Panc1 (cell line): ENCODE measurements at regions of chr12 and their contacts with region 1.

Region 1: DNA sequence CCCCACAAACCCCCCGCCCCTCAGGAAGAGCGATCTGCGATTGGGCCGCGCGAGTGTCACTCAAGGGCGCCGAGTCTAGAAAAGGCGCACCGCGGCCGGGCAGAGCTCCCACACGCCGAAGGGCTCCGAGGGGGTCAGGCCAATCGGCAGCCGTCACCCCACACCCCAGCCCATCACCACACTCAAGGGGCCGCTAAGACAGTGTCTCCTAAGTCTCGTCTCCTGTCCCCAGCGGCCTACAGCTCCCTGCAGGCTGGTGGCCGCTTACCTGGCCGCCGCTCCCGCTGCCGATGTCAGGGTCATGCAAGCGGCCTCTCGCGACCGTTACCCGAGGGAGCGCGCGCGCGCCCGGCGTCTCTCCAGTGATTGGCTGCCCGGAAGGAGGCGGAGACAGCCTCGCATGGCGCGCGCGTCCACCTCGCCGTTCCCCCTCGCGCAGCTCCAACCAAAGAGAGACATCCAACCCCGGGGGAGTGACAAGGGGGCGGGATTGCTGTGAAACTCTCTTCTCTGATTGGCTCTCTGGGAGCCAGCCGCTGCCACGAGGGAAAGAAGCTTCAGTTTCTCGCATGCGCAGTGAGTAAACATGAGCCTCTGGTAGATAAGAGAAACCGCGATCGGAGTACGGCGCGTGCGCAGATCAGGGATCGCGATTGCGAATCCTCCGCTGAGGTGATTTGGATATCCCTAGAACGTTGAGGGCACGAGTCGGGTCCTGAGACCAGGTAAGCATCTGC is at the starts of genes MPHOSPH9 and MTRFR:
- DNase-seq: peak; percentile 95
- ATAC-seq: peak; percentile 96
- H3K4me3 ChIP-seq: peak within 1 kb of the TSS; percentile 67 to 78
- H3K27ac ChIP-seq: peak within 1 kb of the TSS; percentile 94
- H3K4me1 ChIP-seq: peaks cover 30% of the 10 kb centered on the region
- H3K27me3 ChIP-seq: no peaks in the 10 kb centered on the region
- CTCF ChIP-seq: no peak
- total RNA-seq, gene MPHOSPH9: 72.3 TPM
- total RNA-seq, gene MTRFR: 21.5 TPM

Region 2: GRCh38 chr12:122980183-122981046 is 252.6 kb before region 1 on chr12 and contains the start of gene ARL6IP4:
- CTCF ChIA-PET with region 1: no interaction called
- POLR2A ChIA-PET with region 1: no interaction called
- in situ Hi-C with region 1: no loop called
- intact Hi-C with region 1: loop called (anchors 10 kb)
- DNase-seq: no peak
- ATAC-seq: peak; percentile 71
- H3K4me3 ChIP-seq: peak within 1 kb of the TSS; percentile 69 to 78
- H3K27ac ChIP-seq: peak within 1 kb of the TSS; percentile 92
- H3K4me1 ChIP-seq: peaks cover 51% of the 10 kb centered on the region
- H3K27me3 ChIP-seq: no peaks in the 10 kb centered on the region
- CTCF ChIP-seq: no peak
- total RNA-seq, gene ARL6IP4: 184 TPM

Region 3: GRCh38 chr12:123021688-123022604 is 211.0 kb before region 1 on chr12:
- CTCF ChIA-PET with region 1: no interaction called
- POLR2A ChIA-PET with region 1: interaction called, 10 read pairs
- in situ Hi-C with region 1: no loop called
- intact Hi-C with region 1: no loop called
- DNase-seq: no peak
- ATAC-seq: no peak
- H3K4me3 ChIP-seq: no peak overlapping the region
- H3K27ac ChIP-seq: no peak overlapping the region
- H3K4me1 ChIP-seq: peaks cover 10% of the 10 kb centered on the region
- H3K27me3 ChIP-seq: no peaks in the 10 kb centered on the region
- CTCF ChIP-seq: no peak

Region 4: GRCh38 chr12:123319826-123320225 is 86.9 kb after region 1 on chr12:
- CTCF ChIA-PET with region 1: no interaction called
- POLR2A ChIA-PET with region 1: interaction called, 11 read pairs
- in situ Hi-C with region 1: no loop called
- intact Hi-C with region 1: no loop called
- DNase-seq: no peak
- ATAC-seq: no peak
- H3K4me3 ChIP-seq: no peak overlapping the region
- H3K27ac ChIP-seq: no peak overlapping the region
- H3K4me1 ChIP-seq: no peaks in the 10 kb centered on the region
- H3K27me3 ChIP-seq: no peaks in the 10 kb centered on the region
- CTCF ChIP-seq: no peak